ENCODE measurements at regions of chr14 and their contacts with region 1.

Region 1: DNA sequence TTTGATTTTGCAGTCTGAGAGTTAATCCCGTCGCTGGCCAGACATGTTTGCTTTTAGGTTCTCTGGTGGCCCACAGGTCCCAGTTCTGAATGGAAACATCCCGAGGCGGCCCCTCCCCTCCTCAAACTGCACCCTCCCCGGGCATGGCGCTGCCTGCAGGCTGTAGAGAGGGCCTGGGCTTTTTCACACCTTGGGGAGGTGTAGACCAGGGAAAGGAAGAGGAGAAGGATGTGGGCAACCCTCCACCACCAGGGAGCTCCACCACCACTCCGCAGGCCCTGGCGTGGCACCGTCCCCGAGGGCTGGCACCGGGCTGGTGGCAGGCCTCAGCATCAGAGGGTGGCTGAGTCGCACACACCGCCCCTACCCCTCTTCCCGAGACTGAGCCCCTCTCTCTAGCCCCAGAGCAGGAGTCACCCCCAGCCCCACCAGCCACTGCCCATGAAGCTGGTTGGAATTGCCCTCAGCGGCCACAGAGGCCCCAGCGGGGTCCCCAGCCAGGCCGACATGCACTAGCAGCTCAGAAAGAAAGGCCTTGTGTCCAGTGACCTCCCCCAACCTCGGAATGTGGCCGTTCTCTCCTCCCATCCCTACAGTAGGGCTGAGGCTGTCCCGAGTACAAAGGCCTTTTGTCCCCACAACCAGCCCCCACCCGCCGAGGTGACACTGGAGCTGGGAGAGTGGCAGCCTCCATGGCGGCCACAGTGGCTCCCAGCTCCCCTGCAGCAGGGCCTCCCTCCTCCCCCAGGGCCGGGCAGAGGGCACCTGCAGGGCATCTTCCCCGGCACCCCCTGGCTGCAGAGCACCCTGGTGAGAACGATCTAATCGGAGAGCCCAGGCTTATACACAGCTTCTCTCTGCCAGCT is 23.5 kb upstream of the INF2 start:
- DNase-seq: peak; percentile 37
- ATAC-seq: peak; percentile 90
- H3K4me3 ChIP-seq: no peak overlapping the region
- H3K27ac ChIP-seq: no peak overlapping the region
- H3K4me1 ChIP-seq: peaks cover 10% of the 10 kb centered on the region; the same call in 1 of the 2 replicates
- H3K27me3 ChIP-seq: no peaks in the 10 kb centered on the region
- CTCF ChIP-seq: peak; percentile 45; the same call in 1 of the 2 replicates

Region 2: GRCh38 chr14:104633276-104634137 is 32.4 kb before region 1 on chr14:
- CTCF ChIA-PET with region 1: no interaction called
- POLR2A ChIA-PET with region 1: no interaction called
- intact Hi-C with region 1: no loop called
- DNase-seq: no peak
- ATAC-seq: no peak
- H3K4me3 ChIP-seq: no peak overlapping the region
- H3K27ac ChIP-seq: no peak overlapping the region
- H3K4me1 ChIP-seq: 0 out of 2 replicates have a peak, but pooled peaks cover 10% of the 10 kb centered on the region
- H3K27me3 ChIP-seq: peaks cover 93% of the 10 kb centered on the region
- CTCF ChIP-seq: no peak

Region 3: DNA sequence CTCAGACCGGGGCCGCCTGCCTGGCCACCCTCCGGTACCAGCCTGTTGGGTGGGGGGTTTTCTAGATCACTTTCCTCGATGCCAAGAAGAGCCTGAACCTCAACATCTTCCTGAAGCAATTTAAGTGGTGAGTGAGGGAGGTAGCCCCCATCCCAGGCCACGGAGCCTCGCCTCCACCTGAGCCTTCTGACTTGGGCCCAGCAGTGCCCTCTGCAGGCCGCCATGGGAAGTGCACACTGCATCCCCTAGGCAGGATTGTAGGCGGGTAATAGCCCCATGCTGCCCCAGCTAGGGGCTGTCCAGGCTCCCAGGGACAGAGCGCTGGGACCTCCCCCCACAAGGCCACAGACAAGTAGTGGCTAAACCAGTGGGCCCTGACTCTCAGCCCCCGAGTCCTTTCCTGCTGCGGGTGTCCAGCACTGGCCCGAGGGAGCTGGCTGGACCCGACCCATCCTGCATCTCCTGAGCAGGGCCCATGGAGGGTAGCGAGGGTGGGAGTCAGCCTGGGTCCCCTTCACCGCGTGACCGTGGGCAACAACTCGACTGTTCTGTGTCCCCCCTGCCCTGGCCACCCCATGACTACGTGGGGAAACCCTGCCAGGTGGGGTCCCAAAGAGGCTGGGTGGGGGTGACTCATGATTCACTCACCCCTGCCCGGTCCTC is 42.8 kb after region 1 on chr14:
- CTCF ChIA-PET with region 1: interaction called, 3 read pairs
- POLR2A ChIA-PET with region 1: no interaction called
- intact Hi-C with region 1: loop called (anchors 1 kb)
- DNase-seq: peak; percentile 80
- ATAC-seq: peak; percentile 71
- H3K4me3 ChIP-seq: no peak overlapping the region
- H3K27ac ChIP-seq: no peak overlapping the region
- H3K4me1 ChIP-seq: no peaks in the 10 kb centered on the region
- H3K27me3 ChIP-seq: no peaks in the 10 kb centered on the region
- CTCF ChIP-seq: peak; percentile 93